Activated naive CD4-positive, alpha-beta T cell treated with anti-CD3 and anti-CD28 coated beads for 36 hours (primary cell): ENCODE measurements at regions of chr2 and their contacts with region 1.

Region 1: GRCh38 chr2:201257956-201258665 is 2.2 kb upstream of the CASP8 start:
- DNase-seq: peak; percentile 98
- H3K4me3 Mint-ChIP-seq: peak overlapping the region; percentile 78
- H3K27ac Mint-ChIP-seq: peak overlapping the region; percentile 97
- H3K4me1 Mint-ChIP-seq: peaks cover 71% of the 10 kb centered on the region
- H3K27me3 Mint-ChIP-seq: no peaks in the 10 kb centered on the region

Region 2: GRCh38 chr2:200864176-200864976 is 393.7 kb before region 1 on chr2 and contains the start of gene CLK1:
- CTCF ChIA-PET with region 1: no interaction called
- intact Hi-C with region 1: loop called (anchors 1 kb)
- DNase-seq: peak; percentile 98
- H3K4me3 Mint-ChIP-seq: peak within 1 kb of the TSS; percentile 98
- H3K27ac Mint-ChIP-seq: peak within 1 kb of the TSS; percentile 100
- H3K4me1 Mint-ChIP-seq: peaks cover 32% of the 10 kb centered on the region
- H3K27me3 Mint-ChIP-seq: no peaks in the 10 kb centered on the region
- total RNA-seq, gene CLK1: 174 to 196 TPM

Region 3: GRCh38 chr2:201182650-201183364 is 75.3 kb before region 1 on chr2 and contains the start of gene CASP10:
- CTCF ChIA-PET with region 1: interaction called, 10 read pairs
- intact Hi-C with region 1: loop called (anchors 1 kb)
- DNase-seq: peak; percentile 32
- H3K4me3 Mint-ChIP-seq: peak within 1 kb of the TSS; percentile 97
- H3K27ac Mint-ChIP-seq: peak within 1 kb of the TSS; percentile 96
- H3K4me1 Mint-ChIP-seq: peaks cover 39% of the 10 kb centered on the region
- H3K27me3 Mint-ChIP-seq: no peaks in the 10 kb centered on the region
- total RNA-seq, gene CASP10: 22.0 to 22.1 TPM

Region 4: DNA sequence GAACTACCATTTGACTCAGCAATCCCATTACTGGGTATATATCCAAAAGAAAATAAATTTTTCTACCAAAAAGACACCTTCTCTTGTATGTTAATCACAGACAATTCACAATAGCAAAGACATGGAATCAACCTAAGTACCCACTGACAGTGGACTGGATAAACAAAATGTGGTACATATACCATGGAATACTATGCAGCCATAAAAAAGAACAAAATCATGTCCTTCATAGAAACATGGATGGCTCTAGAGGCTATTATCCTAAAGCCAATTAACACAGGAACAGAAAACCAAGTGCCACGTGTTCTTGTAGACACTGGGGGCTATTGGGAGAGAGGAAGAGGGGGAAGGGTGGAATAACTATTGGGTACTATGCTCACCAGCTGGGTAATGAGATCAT is 71.3 kb after region 1 on chr2:
- CTCF ChIA-PET with region 1: no interaction called
- intact Hi-C with region 1: no loop called
- DNase-seq: no peak
- H3K4me3 Mint-ChIP-seq: no peak overlapping the region
- H3K27ac Mint-ChIP-seq: no peak overlapping the region
- H3K4me1 Mint-ChIP-seq: no peaks in the 10 kb centered on the region
- H3K27me3 Mint-ChIP-seq: no peaks in the 10 kb centered on the region

Region 5: GRCh38 chr2:201363857-201364560 is 105.9 kb after region 1 on chr2:
- CTCF ChIA-PET with region 1: interaction called, 17 read pairs
- intact Hi-C with region 1: loop called (anchors 1 kb)
- DNase-seq: peak; percentile 48
- H3K4me3 Mint-ChIP-seq: no peak overlapping the region
- H3K27ac Mint-ChIP-seq: no peak overlapping the region
- H3K4me1 Mint-ChIP-seq: peaks cover 13% of the 10 kb centered on the region
- H3K27me3 Mint-ChIP-seq: no peaks in the 10 kb centered on the region

Region 6: DNA sequence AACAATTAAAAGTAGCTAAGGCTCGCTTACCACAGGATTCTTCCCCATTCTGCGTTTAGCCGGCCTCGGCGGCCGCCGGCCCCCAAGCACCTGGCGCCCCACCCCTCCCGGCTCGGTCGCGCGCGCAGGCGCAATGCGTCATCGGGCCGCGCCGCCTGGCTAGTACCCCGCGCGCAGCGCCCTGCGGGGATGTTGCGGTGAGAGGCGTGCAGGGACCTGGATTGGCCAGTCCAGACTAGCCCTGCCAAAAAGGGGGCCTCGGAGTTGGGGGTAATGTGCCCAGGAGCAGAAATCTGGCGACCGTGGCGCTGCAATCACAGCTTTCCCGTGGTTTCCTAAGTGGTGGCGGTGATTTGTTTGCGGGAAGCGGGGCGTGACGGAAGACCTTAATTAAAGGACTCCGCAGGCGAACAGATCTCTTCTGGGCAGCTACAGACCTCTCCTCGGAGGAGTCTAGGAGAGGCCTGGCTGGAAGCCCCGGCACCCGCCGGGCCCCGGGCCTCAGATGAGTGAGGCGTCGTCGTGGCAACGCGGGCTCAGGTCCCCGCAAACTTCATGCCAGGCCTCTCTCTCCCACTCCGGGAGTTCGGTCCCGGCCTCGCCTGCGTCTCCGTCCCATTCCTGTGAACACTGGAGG is 384.6 kb after region 1 on chr2:
- CTCF ChIA-PET with region 1: no interaction called
- intact Hi-C with region 1: loop called (anchors 5 kb)
- DNase-seq: peak; percentile 87
- H3K4me3 Mint-ChIP-seq: peak overlapping the region; percentile 79
- H3K27ac Mint-ChIP-seq: peak overlapping the region; percentile 79
- H3K4me1 Mint-ChIP-seq: peaks cover 11% of the 10 kb centered on the region
- H3K27me3 Mint-ChIP-seq: no peaks in the 10 kb centered on the region

Region 7: GRCh38 chr2:202375609-202376408 is 1117.7 kb after region 1 on chr2 and contains the start of gene BMPR2:
- CTCF ChIA-PET with region 1: no interaction called
- intact Hi-C with region 1: loop called (anchors 5 kb)
- DNase-seq: peak; percentile 79
- H3K4me3 Mint-ChIP-seq: peak within 1 kb of the TSS; percentile 96
- H3K27ac Mint-ChIP-seq: peak within 1 kb of the TSS; percentile 71
- H3K4me1 Mint-ChIP-seq: peaks cover 20% of the 10 kb centered on the region
- H3K27me3 Mint-ChIP-seq: no peaks in the 10 kb centered on the region
- total RNA-seq, gene BMPR2: 4.2 to 5.5 TPM